Left ventricle myocardium inferior (tissue), 1 donor: ENCODE measurements at regions of chr1 and their contacts with region 1.

Region 1: DNA sequence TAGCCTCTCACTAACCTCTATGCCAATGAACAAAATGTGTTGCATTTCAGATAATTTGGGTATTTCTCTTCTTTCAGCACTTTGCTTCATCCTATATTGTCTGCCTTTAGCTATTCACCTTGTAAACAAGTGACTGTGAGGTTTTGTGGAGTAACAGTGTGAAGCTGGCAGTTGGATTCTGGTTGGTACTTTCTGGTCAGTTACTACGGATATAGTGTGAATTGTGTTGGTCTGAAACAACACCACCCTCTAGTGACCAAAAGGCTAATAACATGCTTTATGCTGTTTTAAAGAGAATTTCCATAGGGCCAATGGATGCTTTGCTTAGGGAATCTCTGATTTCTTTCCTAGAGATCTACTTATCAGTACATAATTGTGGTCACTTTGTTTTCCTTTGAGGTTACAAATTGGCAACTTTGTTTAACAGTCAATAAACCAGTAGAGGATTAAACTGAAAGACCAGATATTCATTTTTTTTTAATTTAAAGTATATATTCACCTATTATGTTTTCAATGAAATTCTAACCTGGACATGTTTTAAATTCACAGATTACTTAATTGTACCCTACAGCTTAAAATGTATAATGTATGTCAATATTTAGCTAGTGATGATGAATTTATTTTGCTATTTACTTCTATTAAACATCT is 2.5 kb upstream of the PTGER3 start:
- DNase-seq: no peak
- H3K4me3 ChIP-seq: no peak overlapping the region
- H3K27ac ChIP-seq: no peak overlapping the region
- H3K4me1 ChIP-seq: peaks cover 20% of the 10 kb centered on the region
- H3K27me3 ChIP-seq: peaks cover 40% of the 10 kb centered on the region
- CTCF ChIP-seq: peak; percentile 80

Region 2: DNA sequence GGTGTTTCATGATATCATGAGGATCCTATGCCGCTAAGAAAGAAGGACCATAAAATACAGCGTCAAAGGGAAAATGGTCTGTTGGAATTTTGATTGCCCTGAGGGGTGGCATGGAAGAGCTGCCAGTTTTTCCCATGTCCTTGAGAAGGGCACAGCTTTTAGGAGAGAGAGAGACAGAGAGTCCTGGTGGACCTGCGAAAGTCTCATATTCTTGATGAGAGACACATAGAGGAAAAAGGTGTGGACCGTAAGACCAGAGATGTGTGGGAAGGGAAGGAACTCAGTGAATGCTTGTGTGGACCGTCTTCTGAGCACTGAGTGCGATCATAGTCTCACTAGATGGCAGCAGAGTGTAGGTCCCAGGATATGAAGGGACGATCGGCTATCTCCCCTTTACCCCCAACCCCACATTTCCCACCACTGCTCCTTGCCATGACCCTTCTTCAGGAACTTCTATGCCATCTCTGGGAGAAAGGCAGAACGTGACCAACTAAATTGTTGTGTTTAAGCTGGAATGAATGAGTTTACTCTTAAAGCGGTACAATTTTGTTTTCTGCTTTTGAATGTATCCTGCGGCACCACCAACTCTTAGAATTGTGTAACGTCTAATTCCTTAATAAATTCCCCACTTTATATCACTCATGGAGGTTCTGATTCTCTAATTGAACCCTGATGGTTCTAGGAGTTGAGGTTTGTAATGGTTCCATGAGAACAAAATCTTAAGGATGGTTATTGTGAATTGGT is 521.3 kb before region 1 on chr1:
- intact Hi-C with region 1: loop called (anchors 5 kb)
- DNase-seq: no peak
- H3K4me3 ChIP-seq: no peak overlapping the region
- H3K27ac ChIP-seq: no peak overlapping the region
- H3K4me1 ChIP-seq: no peaks in the 10 kb centered on the region
- H3K27me3 ChIP-seq: peaks cover 17% of the 10 kb centered on the region
- CTCF ChIP-seq: peak; percentile 72

Region 3: GRCh38 chr1:70633004-70633403 is 417.1 kb before region 1 on chr1:
- intact Hi-C with region 1: no loop called
- DNase-seq: peak; percentile 12
- H3K4me3 ChIP-seq: no peak overlapping the region
- H3K27ac ChIP-seq: no peak overlapping the region
- H3K4me1 ChIP-seq: no peaks in the 10 kb centered on the region
- H3K27me3 ChIP-seq: no peaks in the 10 kb centered on the region
- CTCF ChIP-seq: no peak

Region 4: DNA sequence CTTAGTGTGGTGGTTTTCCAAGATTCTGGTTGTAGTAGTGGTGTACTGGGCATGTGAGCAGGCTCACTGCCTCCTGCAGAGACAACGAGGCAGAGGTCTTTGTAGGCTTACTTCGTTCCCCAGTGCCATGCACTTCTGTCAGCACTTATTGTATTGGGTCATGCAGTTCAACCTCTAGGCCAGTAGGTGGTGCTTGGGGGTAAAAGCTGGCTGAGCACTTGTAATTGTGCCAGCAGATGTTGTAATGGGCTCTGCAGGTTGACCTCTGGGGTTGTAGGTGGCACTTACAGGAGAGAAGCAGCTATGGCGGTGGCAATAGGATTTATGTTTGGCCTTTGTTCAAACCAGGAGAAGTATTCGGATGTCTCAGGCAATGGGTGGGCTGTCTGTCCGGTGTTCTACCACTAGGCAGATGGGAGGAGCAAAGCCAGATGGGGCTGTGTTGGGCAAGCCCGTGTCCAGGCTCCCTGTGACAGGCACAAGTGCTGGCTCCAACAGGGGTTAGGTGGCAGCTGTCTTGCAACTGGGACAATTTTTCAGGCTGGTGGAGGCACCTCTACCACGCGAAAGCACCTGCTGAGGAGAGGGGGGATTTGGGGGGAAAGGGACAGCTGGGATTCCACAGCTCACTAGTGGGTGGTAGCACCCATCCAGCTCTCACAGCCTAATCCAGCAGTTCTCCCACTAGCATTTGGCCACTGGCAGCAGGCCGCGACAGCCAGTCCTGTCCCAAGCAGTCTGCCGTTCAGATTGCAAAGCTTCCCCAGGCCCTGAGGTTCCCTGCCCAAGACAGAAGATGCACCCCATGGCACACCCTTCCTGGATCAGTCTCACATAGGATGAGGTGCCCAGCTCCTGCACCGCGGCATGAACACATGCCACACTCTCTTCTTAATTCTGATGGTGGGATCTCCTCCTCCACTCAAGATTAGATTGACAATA is 364.5 kb before region 1 on chr1:
- intact Hi-C with region 1: loop called (anchors 5 kb)
- DNase-seq: peak; percentile 29
- H3K4me3 ChIP-seq: no peak overlapping the region
- H3K27ac ChIP-seq: no peak overlapping the region
- H3K4me1 ChIP-seq: no peaks in the 10 kb centered on the region
- H3K27me3 ChIP-seq: no peaks in the 10 kb centered on the region
- CTCF ChIP-seq: peak; percentile 89

Region 5: DNA sequence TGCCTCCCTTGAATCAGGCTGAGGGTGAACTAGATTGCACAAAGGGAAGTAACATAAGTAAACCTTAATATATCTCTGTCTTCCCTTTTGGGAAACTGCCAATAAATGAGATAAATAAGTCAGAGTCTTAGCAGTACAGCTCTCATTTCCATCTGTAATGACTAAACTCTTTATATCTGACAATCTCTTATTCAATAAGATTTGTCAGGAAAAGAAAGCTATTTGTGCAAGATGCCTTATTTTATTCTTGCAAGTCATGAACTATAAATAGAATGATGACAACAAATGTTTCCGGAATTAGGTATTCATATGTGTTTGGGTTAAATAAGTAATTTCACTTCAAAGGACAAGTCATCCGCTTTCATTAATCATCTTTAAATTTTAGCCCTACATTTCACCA is 231.7 kb before region 1 on chr1:
- intact Hi-C with region 1: no loop called
- DNase-seq: no peak
- H3K4me3 ChIP-seq: no peak overlapping the region
- H3K27ac ChIP-seq: no peak overlapping the region
- H3K4me1 ChIP-seq: peaks cover 14% of the 10 kb centered on the region
- H3K27me3 ChIP-seq: no peaks in the 10 kb centered on the region
- CTCF ChIP-seq: no peak

Region 6: DNA sequence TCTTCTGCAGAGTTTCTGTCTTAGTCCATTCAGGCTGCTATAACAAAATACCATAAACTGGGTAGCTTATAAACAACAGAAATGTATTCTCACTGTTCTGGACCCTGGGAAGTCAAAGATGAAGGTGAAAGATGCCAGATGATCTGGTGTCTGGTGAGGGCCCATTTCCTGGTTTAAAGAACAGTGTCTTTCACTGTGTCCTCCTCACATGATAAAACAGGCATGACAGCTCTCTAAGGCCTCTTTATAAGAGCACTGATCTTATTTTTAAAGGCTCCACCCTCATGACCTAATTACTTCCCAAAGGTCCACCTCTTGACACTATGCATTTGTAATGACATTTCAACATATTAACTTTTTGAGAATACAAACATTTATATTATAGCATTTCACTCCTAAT is 280.9 kb after region 1 on chr1:
- intact Hi-C with region 1: no loop called
- DNase-seq: no peak
- H3K4me3 ChIP-seq: no peak overlapping the region
- H3K27ac ChIP-seq: no peak overlapping the region
- H3K4me1 ChIP-seq: no peaks in the 10 kb centered on the region
- H3K27me3 ChIP-seq: no peaks in the 10 kb centered on the region
- CTCF ChIP-seq: no peak